ENCODE measurements at regions of chr2 and their contacts with region 1.

Region 1: GRCh38 chr2:134892282-134893070 is 26.1 kb upstream of the CCNT2 start:
- DNase-seq: no peak
- ATAC-seq: no peak
- H3K4me3 ChIP-seq: no peak overlapping the region
- H3K27ac ChIP-seq: no peak overlapping the region
- H3K4me1 ChIP-seq: no peaks in the 10 kb centered on the region
- H3K27me3 ChIP-seq: no peaks in the 10 kb centered on the region
- CTCF ChIP-seq: no peak
- POLR2A ChIP-seq: no peak
- RAD21 ChIP-seq: no peak

Region 2: GRCh38 chr2:134866549-134866981 is 25.9 kb before region 1 on chr2:
- CTCF ChIA-PET with region 1: no interaction called
- POLR2A ChIA-PET with region 1: interaction called, 17 read pairs
- dilution Hi-C with region 1: no loop called
- in situ Hi-C with region 1: no loop called
- intact Hi-C with region 1: no loop called
- DNase-seq: peak; percentile 85
- ATAC-seq: peak; percentile 90
- H3K4me3 ChIP-seq: no peak overlapping the region
- H3K27ac ChIP-seq: peak overlapping the region; percentile 72
- H3K4me1 ChIP-seq: peaks cover 9% of the 10 kb centered on the region; the same call in 1 of the 2 replicates
- H3K27me3 ChIP-seq: no peaks in the 10 kb centered on the region; the same call in 1 of the 2 replicates
- CTCF ChIP-seq: no peak
- POLR2A ChIP-seq: no peak
- RAD21 ChIP-seq: no peak